ENCODE measurements at regions of chr18 and their contacts with region 1.

Region 1: GRCh38 chr18:32425466-32425865 is 45.2 kb downstream of the GAREM1 start:
- DNase-seq: no peak
- H3K4me3 Mint-ChIP-seq: no peak overlapping the region
- H3K27ac Mint-ChIP-seq: peak overlapping the region; percentile 56
- H3K4me1 Mint-ChIP-seq: peaks cover 66% of the 10 kb centered on the region
- H3K27me3 Mint-ChIP-seq: no peaks in the 10 kb centered on the region
- CTCF ChIP-seq: no peak

Region 2: GRCh38 chr18:32383050-32383819 is 42.2 kb before region 1 on chr18:
- CTCF ChIA-PET with region 1: no interaction called
- intact Hi-C with region 1: loop called (anchors 5 kb)
- DNase-seq: peak; percentile 53
- H3K4me3 Mint-ChIP-seq: peak overlapping the region; percentile 43
- H3K27ac Mint-ChIP-seq: peak overlapping the region; percentile 82
- H3K4me1 Mint-ChIP-seq: peaks cover 64% of the 10 kb centered on the region
- H3K27me3 Mint-ChIP-seq: no peaks in the 10 kb centered on the region
- CTCF ChIP-seq: no peak

Measured in Calu3 (cell line).